ENCODE measurements at regions of chr3 and their contacts with region 1.

Region 1: DNA sequence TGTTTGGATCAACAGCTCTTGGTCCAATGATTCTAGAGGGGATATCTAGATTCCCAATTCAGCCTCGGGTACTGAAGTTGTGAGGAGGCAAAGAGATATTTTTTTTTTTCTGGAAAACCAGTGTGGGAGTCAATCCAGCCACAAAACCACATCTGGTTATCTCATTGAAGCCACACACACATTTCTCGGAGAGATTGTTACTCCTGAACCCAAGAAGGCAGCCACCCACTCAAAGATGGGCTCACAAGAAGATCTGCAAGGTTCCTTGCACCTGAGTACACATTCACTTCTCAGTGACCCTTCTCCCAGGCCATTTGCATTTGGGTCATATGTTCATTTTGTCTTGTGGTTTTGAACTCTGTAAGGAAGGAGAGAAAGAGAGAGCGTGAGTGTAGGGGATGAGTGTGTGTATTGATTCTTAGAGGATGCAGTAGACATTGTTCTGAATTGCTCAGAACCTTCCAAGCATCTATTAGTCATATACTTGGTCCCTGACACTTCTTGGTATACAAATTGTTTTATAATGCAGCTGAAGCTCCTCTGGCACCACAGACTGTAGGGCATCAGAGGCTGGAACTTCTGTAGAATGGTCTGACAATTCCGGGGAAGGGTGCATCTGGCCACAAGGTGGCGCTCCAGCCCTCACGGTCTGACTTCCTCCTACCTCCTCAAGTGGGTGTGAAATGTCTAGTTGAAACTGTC is 39.3 kb upstream of the TRA2B start:
- DNase-seq: peak; percentile 70
- H3K4me3 ChIP-seq: no peak overlapping the region; a peak in 1 of 4 replicates
- H3K27ac ChIP-seq: no peak overlapping the region
- H3K4me1 ChIP-seq: no peaks in the 10 kb centered on the region
- H3K27me3 ChIP-seq: no peaks in the 10 kb centered on the region
- CTCF ChIP-seq: peak; percentile 96
- EP300 ChIP-seq: no peak
- RAD21 ChIP-seq: peak; percentile 73

Region 2: GRCh38 chr3:185992831-185993374 is 15.8 kb after region 1 on chr3:
- CTCF ChIA-PET with region 1: interaction called, 12 read pairs
- POLR2A ChIA-PET with region 1: no interaction called
- DNase-seq: no peak
- H3K4me3 ChIP-seq: no peak overlapping the region
- H3K27ac ChIP-seq: no peak overlapping the region
- H3K4me1 ChIP-seq: no peaks in the 10 kb centered on the region; a peak in 1 of 4 replicates
- H3K27me3 ChIP-seq: peaks cover 7% of the 10 kb centered on the region
- CTCF ChIP-seq: no peak
- EP300 ChIP-seq: no peak
- RAD21 ChIP-seq: no peak

Measured in SK-N-SH (cell line).